Ovary (tissue), 10 donors: ENCODE measurements at regions of chr3 and their contacts with region 1.

Region 1: DNA sequence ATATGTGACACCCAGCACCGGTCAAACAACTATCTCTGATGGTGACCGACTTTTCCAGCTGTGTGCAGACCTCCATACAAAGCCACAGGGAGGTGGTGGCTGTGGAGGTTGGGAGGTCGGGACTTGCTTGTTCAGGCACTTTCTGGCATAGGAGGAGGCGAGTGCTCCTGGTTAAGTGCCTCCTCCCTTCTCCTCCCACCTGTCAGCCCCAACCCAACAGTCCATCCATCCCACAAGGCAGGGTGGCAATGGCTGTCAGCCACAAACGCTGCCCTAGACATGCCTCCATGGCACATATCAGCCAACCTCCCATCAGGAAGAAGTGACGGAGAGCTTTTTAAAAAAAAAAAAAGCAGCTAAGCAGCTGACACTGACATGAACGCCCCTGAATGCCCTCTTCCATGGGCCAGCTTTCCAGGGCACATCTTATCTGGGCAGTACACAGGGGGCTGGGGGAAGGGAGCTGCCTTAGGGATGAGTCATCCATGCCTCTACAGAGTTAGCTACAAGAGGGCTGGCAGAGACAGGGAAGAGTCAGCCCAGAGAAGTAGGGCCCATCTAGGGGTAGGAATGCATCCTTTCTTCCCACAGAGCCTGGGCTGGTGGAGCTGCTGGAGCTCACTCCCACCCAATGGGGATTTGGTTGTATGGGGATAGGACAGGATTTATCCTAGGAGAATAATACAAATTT is 41.2 kb downstream of the CCDC12 start:
- DNase-seq: peak; percentile 78 to 87 (median 84)
- H3K4me3 ChIP-seq: no peak overlapping the region
- H3K27ac ChIP-seq: peak overlapping the region; percentile 22 to 70
- H3K4me1 ChIP-seq: peaks cover 46% of the 10 kb centered on the region
- H3K27me3 ChIP-seq: no peaks in the 10 kb centered on the region
- CTCF ChIP-seq: peak; percentile 30 to 72 (median 65)
- EP300 ChIP-seq: no peak
- POLR2A ChIP-seq: no peak

Region 2: GRCh38 chr3:46674031-46674845 is 261.1 kb before region 1 on chr3:
- intact Hi-C with region 1: no loop called
- DNase-seq: peak in 4 of 5 donors; percentile 5 to 16 (median 10)
- H3K4me3 ChIP-seq: no peak overlapping the region
- H3K27ac ChIP-seq: no peak overlapping the region
- H3K4me1 ChIP-seq: no peaks in the 10 kb centered on the region
- H3K27me3 ChIP-seq: no peaks in the 10 kb centered on the region
- CTCF ChIP-seq: no peak
- EP300 ChIP-seq: no peak
- POLR2A ChIP-seq: no peak

Region 3: DNA sequence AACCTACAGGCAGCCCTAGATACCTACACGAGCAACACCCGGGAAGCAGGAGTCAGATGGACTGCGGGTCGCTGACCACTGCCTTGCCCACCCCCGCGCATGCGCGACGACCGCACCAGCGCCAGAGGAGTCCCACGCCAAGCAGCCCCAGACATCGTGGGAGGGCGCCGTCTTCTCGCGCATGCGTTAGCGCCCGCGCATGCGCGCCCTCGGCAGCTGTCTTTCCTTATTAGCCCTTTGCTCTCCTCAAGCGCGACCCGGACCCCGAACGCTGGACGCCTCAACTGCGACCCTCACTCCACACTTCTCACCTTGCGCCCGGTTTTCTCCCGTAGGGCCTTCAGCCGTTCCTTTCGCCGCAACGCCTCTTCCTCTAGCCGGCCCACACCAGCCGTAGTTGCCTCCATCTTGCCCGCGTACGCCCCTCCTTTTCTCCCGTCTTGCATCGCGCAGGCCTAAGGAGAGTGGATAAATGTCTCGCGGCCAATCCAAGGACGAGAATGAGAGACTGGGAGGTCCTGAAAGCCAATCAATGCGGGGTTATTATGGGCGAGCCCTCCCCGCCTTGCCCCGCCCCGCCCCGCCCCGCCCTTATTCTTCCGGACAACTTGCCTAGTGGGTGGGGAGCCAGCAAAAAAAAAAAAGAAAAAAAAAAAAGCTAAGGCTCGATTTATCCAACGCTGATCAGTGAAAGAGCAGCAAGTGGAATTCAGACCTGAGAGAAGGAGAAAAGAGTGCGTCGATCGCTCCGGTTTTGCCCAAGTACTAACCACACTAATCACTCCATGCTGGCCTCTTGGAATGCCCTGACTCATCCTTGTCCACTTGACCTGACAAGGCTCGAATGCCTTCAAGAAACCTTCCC is 41.2 kb after region 1 on chr3 and contains the start of gene CCDC12:
- intact Hi-C with region 1: loop called in 1 of 4 experiments (anchors 5 kb)
- DNase-seq: peak; percentile 92 to 95 (median 94)
- H3K4me3 ChIP-seq: peak within 1 kb of the TSS; percentile 83
- H3K27ac ChIP-seq: peak within 1 kb of the TSS; percentile 88 to 93
- H3K4me1 ChIP-seq: peaks cover 5% of the 10 kb centered on the region
- H3K27me3 ChIP-seq: no peaks in the 10 kb centered on the region
- CTCF ChIP-seq: no peak
- EP300 ChIP-seq: no peak
- POLR2A ChIP-seq: peak; percentile 93
- total RNA-seq, gene CCDC12: 32.2 to 50.1 (median 42.3) TPM

Region 4: DNA sequence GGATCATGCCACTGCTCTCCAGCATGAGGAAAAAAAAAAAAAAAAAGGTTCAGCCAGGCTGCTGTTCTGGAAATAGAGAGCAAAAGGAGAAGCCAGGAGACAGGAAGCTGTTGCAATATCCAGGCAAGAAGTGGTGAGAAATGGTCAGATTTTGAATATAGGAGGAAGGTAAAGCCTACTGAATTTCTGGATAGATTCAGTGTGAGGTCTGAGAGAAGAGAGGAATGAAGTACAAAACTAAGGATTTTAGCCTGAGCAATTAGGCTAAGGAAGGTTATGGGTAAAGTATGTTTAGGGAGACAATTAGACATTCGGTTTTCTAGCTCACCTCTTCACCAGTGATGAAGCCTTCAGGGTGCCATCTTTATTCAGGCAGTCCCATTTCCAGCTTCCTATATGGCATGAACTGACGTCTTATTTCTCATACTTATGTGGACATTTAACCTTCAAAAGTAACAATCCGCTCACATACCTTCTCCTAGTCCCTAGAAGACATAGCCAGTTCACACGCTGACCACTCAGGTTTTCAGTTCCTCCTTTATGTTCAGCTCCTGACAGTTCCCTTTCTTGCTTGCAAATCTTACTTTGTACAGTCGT is 290.1 kb after region 1 on chr3:
- intact Hi-C with region 1: no loop called
- DNase-seq: no peak
- H3K4me3 ChIP-seq: no peak overlapping the region
- H3K27ac ChIP-seq: no peak overlapping the region
- H3K4me1 ChIP-seq: no peaks in the 10 kb centered on the region
- H3K27me3 ChIP-seq: no peaks in the 10 kb centered on the region
- CTCF ChIP-seq: no peak
- EP300 ChIP-seq: no peak
- POLR2A ChIP-seq: no peak

Region 5: GRCh38 chr3:47324278-47324865 is 389.1 kb after region 1 on chr3:
- intact Hi-C with region 1: loop called in 2 of 4 experiments (anchors 10 kb)
- DNase-seq: peak; percentile 46 to 73 (median 52)
- H3K4me3 ChIP-seq: no peak overlapping the region
- H3K27ac ChIP-seq: no peak overlapping the region
- H3K4me1 ChIP-seq: peaks cover 2% of the 10 kb centered on the region
- H3K27me3 ChIP-seq: no peaks in the 10 kb centered on the region
- CTCF ChIP-seq: peak; percentile 55 to 62 (median 62)
- EP300 ChIP-seq: no peak
- POLR2A ChIP-seq: no peak